Naive thymus-derived CD4-positive, alpha-beta T cell (primary cell): ENCODE measurements at regions of chr11 and their contacts with region 1.

Region 1: GRCh38 chr11:55572548-55572947 is 620 bp downstream of the OR4C16 start:
- DNase-seq: no peak
- ATAC-seq: no peak
- H3K4me3 ChIP-seq: no peak overlapping the region
- H3K4me3 Mint-ChIP-seq: no peak overlapping the region
- H3K27ac ChIP-seq: no peak overlapping the region
- H3K27ac Mint-ChIP-seq: no peak overlapping the region
- H3K4me1 ChIP-seq: no peaks in the 10 kb centered on the region
- H3K4me1 Mint-ChIP-seq: no peaks in the 10 kb centered on the region
- H3K27me3 ChIP-seq: no peaks in the 10 kb centered on the region
- H3K27me3 Mint-ChIP-seq: no peaks in the 10 kb centered on the region

Region 2: DNA sequence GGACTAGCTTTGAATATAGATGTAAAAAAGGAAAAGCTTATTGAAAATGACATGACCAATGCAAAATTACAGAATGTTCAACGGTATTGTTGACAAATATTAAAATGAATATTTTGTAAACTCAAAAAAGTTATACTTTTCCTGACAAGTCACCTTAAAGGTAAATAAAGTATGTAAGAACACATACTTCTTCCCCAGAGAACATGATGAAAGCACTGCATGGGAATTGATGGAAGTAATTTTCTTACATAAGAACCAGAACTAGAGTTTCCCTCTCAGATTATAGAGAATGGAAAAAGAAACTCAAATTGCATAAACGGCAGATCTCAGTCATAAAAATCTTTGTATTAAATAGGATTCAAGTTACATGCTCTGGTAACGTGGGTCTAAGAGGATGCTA is 62.3 kb after region 1 on chr11 and contains the start of gene OR4P4:
- CTCF ChIA-PET with region 1: no interaction called
- POLR2A ChIA-PET with region 1: no interaction called
- intact Hi-C with region 1: loop called in 1 of 2 experiments (anchors 10 kb)
- DNase-seq: no peak
- ATAC-seq: no peak
- H3K4me3 ChIP-seq: no peak within 1 kb of the TSS
- H3K4me3 Mint-ChIP-seq: no peak within 1 kb of the TSS
- H3K27ac ChIP-seq: no peak within 1 kb of the TSS
- H3K27ac Mint-ChIP-seq: no peak within 1 kb of the TSS
- H3K4me1 ChIP-seq: no peaks in the 10 kb centered on the region
- H3K4me1 Mint-ChIP-seq: no peaks in the 10 kb centered on the region
- H3K27me3 ChIP-seq: no peaks in the 10 kb centered on the region
- H3K27me3 Mint-ChIP-seq: no peaks in the 10 kb centered on the region
- total RNA-seq, gene OR4P4: not detected

Region 3: DNA sequence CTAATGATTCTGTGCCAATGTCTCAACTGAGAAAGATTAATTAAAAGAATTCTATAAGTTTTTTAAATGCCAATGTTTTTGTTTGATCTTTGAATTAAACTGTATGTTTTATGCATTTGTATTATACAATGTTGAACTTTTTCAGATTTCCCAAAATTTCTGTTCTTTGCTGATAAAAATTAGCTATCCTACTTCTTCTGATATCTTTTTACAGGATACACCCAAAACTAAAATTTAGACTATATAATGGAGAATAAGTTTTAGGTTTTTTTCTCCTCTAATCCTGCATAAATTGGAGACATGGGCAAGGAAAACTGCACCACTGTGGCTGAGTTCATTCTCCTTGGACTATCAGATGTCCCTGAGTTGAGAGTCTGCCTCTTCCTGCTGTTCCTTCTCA is 254.4 kb after region 1 on chr11 and contains the start of gene OR5L2:
- CTCF ChIA-PET with region 1: no interaction called
- POLR2A ChIA-PET with region 1: no interaction called
- intact Hi-C with region 1: no loop called
- DNase-seq: no peak
- ATAC-seq: no peak
- H3K4me3 ChIP-seq: no peak within 1 kb of the TSS
- H3K4me3 Mint-ChIP-seq: no peak within 1 kb of the TSS
- H3K27ac ChIP-seq: no peak within 1 kb of the TSS
- H3K27ac Mint-ChIP-seq: no peak within 1 kb of the TSS
- H3K4me1 ChIP-seq: no peaks in the 10 kb centered on the region
- H3K4me1 Mint-ChIP-seq: no peaks in the 10 kb centered on the region
- H3K27me3 ChIP-seq: no peaks in the 10 kb centered on the region
- H3K27me3 Mint-ChIP-seq: no peaks in the 10 kb centered on the region
- total RNA-seq, gene OR5L2: not detected